ENCODE measurements at regions of chr12 and their contacts with region 1.

Region 1: DNA sequence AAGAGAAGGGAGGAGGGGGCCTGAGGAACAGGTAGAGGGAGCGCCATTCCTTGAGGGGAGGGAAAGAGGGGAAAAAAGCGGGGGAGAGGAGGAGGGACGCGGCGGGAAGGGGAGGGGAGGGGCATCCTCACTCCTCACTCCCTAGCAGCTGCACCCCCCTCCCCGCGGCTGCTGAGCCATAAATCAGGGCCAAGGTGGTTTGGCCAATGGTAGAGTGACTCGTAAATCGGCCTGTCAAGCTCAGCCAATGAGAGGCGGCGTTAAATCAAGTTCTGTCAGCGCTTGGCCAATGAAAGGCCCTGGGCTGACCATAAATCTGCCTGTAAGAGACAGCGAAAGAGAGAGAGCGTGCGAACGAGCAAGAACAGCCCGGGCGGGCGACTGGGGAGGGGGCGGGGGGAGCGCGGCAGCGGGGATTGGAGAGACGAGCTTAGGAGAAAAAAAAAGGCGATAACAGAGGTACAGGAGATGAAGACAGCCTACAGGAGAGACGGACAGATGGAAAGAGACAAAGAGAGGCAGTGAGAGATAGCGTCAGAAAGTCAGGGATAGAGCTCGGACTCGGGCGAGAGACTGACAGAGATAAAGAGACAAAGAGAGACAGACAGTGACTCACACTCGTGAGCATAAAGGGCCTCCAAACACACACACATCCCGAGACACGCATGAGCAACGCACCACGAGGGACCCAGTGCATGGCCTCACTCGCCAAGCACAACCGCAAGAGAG is 5.1 kb downstream of the GPR84 start:
- H3K4me3 ChIP-seq: peak overlapping the region; percentile 62
- H3K27ac ChIP-seq: peak overlapping the region; percentile 80
- H3K4me1 ChIP-seq: peaks cover 12% of the 10 kb centered on the region
- CTCF ChIP-seq: no peak

Region 2: DNA sequence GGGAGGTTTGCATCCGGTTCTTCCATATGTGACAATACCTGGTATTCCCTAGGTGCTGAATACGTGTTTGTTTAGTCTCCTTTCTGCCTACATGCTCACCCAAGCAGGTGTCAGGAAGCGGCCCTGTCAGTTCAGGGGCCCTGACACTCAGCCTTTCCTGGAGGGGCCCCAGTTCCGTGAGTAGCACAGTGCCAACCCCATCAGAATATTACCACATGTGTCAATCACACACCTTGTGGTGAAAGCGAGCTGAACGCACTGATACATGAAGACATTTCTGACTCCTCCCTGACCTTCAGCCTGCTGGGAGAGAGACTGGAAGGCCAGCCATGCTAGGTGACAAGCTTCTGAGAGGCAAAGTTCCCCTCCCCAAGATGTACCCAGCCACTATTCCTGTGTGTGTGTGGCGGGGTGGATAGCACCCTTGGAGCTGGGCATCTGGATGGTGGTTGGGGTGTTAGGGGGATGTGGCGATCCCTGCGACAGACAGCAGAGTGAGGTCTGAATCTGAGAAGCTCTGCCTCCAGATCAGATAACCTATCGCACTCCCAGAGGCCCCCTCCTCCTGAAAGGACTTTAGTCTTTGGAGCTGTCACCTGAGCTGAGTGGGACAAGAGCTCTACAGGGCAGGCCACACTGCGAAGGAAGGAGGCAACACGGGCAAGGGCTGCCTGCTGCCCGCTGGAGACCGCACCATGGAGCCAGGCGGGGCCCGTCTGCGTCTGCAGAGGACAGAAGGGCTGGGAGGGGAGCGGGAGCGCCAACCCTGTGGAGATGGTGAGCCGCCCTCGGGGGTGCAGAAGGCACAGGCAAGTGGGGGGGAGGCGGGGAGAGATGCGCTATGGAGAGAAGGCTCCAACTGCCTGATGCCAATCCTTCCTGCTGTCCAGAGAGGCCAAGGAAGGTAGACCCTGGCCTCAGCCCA is 1256.1 kb before region 1 on chr12 and contains the start of gene SOAT2:
- CTCF ChIA-PET with region 1: no interaction called
- POLR2A ChIA-PET with region 1: no interaction called
- H3K4me3 ChIP-seq: no peak within 1 kb of the TSS
- H3K27ac ChIP-seq: no peak within 1 kb of the TSS
- H3K4me1 ChIP-seq: no peaks in the 10 kb centered on the region
- CTCF ChIP-seq: no peak

Region 3: DNA sequence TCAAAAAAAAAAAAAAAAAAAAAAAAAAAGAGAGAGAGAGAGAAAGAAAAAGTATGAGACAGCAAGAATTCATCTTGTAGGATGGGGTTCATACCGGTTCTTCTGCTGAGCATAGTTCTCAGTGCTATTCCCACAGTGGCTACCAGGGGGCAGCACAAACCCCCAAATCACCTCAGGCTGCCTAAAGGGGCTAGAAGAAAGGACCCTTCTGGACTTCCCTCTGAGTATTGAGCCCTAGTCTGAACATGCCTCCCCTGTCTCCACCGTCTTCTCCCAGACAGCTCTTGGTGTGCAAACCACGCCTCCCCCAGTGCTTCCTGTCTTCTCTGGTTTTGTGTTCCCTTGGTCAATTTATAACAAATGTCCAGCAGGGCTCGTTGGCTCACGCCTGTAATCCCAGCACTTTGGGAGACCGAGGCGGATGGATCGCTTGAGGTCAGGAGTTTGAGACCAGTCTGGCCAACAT is 139.1 kb before region 1 on chr12:
- CTCF ChIA-PET with region 1: interaction called, 70 read pairs
- POLR2A ChIA-PET with region 1: interaction called, 4 read pairs
- H3K4me3 ChIP-seq: no peak overlapping the region
- H3K27ac ChIP-seq: no peak overlapping the region
- H3K4me1 ChIP-seq: no peaks in the 10 kb centered on the region; the same call in 1 of the 2 replicates
- CTCF ChIP-seq: peak; percentile 84

Region 4: DNA sequence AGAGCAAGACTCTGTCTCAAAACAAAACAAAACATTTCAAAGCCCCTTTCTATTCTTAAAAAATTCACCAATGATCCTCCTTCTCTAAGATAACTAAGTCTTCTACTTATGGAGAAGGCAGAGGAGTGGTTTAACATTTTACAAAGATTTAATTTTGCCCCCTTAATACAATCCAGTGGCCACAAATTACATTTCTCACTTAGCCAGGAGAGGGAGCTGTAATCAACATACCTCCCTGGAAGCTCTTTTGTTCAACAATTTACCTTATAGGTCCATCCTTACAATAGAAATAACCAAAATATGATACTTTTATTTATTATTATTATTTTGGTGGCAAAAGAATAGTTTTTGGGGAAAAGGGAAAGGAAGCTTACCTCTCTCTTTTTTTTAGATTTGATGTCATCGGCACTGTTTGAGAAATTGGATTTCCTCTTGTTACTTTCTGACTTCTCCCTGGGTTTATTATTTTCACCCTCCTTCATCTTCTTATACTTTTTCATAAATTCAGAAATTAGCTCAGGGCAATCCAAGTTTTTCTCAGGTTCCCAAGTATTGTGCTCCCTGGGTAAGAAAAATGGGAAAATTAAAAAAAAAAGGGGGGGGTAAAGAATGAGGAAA is 107.4 kb before region 1 on chr12:
- CTCF ChIA-PET with region 1: interaction called, 11 read pairs
- POLR2A ChIA-PET with region 1: interaction called, 7 read pairs
- H3K4me3 ChIP-seq: no peak overlapping the region
- H3K27ac ChIP-seq: no peak overlapping the region
- H3K4me1 ChIP-seq: no peaks in the 10 kb centered on the region
- CTCF ChIP-seq: no peak

Region 5: DNA sequence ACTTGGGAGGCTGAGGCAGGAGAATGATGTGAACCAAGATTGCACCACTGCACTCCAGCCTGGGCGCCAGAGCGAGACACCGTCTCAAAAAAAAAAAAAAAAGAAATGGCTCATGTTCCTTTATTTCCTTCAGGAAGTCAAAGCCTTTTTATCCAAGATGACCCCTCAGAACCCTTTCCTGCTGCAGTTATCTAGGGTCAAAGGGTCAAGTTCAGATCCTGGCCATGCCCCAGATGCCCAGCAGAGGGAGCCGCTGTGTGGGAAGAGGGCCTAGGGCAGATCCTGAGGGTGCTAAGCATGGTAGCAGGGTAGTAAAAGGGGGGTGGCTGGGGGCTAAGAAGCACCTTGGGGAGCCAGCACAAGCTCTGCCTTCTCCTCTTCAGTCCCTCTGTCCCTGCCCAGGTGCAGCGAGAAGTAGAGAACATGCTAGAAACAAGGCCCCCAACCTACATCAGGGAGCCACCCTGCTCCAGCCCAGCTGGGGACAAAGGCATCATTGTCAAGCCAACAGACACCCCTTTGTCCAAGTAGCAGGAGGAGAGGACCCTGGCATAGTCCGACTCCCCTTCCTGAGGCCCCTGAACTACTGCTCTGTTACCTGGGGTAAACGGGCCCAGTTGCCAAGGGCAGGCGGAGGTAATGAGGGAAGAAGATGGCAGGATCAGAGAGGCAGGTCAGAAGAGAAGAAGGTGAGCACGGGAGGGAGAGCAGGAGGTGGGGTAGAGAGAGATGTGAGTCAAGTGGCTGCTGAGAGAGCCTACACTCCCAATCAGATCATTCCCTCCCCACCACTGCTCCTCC is 64.8 kb before region 1 on chr12:
- CTCF ChIA-PET with region 1: interaction called, 45 read pairs
- POLR2A ChIA-PET with region 1: interaction called, 4 read pairs
- H3K4me3 ChIP-seq: no peak overlapping the region
- H3K27ac ChIP-seq: no peak overlapping the region
- H3K4me1 ChIP-seq: no peaks in the 10 kb centered on the region
- CTCF ChIP-seq: peak; percentile 69

Region 6: DNA sequence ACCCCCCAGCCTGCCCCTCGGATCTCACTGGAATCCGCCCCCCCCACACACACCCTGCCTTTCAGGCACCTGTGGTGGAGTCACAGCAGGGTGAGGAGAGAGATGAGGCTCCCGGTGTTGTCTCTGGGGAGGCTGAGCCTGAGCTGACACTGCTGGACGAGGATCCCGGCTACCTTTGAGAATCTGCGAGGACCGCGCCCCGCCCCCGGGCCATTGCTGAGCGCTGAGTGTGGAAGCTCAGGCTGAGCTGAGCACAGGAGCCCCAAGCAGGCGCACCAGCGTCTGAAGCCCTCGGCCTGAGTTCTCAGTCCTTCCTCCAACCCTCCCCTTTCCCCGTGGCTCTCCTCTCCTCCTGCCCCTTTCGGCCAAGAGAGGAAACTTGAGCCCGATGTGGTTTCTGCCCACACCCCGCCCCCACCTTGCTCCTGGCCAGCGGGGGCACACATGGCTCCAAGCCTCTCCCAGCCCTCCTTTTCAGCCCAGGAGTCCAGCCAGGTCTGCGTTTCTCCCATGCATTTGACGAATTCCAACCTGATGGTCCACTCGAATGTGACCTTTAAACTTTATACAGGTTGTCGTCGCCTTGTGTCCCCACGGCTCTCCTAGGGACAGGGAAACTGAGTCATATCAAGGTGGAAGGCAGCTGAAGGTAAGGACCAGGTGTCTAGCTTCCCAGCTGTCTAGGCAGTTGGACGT is 58.3 kb before region 1 on chr12 and contains the start of gene NFE2:
- CTCF ChIA-PET with region 1: interaction called, 19 read pairs
- POLR2A ChIA-PET with region 1: interaction called, 4 read pairs
- H3K4me3 ChIP-seq: peak within 1 kb of the TSS; percentile 25
- H3K27ac ChIP-seq: no peak within 1 kb of the TSS; the same call in 1 of the 2 replicates
- H3K4me1 ChIP-seq: peaks cover 6% of the 10 kb centered on the region
- CTCF ChIP-seq: peak; percentile 45; the same call in 1 of the 2 replicates